Motor neuron (in vitro differentiated cells): ENCODE measurements at regions of chr10 and their contacts with region 1.

Region 1: DNA sequence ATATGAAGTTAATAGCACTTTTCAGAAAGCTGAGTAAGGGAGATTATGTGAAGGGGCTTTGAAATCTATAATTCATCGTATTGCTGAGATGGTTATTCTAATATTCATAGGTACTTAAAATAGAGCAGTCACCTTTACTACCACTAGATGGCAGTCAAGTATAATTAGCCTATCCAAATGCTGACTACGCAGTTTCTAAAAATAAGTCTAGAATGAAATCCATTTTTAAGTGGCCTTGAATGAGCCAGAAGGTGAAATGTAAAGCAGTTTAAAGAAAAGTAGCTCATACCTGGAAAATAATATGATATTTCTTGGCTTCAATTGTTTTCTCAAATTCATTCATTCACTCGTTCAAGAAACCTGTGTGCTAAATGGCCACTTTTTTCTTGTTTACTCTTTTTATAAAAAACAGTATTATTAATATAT is 1277.1 kb downstream of the GATA3 start:
- ATAC-seq: peak in 5 of 8 experiments; percentile 35 to 71 (median 49)
- H3K4me3 ChIP-seq: no peak overlapping the region
- H3K27ac ChIP-seq: no peak overlapping the region
- H3K4me1 ChIP-seq: peaks cover 0 to 5% of the 10 kb centered on the region in 2 donors

Region 2: DNA sequence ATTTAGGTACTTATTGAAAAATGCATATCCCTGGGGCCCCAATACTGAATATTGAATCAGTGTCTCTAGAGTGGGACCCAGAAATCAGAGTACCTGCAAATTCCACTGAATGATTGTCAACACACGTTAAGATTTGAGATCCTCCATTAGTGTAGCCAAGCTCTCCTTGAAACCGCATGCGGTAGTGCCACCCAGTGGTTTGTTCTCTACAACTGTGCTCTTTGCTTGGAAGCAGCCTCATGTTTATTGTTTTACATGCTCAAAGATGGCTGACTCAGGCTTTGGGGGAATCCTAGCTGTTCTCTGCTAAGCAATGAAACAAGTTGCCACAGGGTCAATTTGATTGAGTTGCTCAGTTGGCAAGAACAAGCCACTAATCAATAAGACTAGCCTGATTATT is 1345.9 kb after region 1 on chr10:
- in situ Hi-C with region 1: loop called in 1 of 9 experiments (anchors 25 kb)
- ATAC-seq: peak; percentile 47 to 95 (median 70)
- H3K4me3 ChIP-seq: no peak overlapping the region
- H3K27ac ChIP-seq: no peak overlapping the region
- H3K4me1 ChIP-seq: peaks cover 0 to 3% of the 10 kb centered on the region in 2 donors

Region 3: DNA sequence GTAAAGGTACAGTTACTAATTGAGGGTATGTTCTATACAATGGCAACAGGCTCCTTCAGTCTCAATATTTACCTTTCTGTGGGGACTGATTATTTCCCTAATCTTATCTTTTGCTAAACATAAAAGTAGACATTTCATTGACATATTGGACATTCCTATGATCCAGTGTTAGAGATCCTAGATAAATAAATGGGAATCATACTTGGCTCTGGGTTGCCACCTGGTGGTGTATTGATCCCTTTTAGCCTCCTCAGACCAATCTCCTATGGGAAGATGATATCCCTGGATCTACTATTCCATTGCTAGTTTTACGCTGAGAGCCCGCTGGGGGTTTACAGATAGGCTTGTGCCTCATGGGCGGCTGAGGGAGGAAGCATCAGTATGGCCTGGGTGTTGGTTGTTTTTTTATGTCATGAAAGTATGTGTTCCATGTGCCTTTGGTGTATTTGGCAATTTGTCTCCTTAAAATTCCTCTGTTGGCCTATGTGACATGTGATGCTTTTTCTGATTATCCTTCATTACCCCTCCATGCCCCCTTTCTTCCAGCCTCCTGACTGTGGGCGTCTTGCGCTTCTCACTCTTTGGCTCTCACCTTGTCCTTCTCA is 1704.9 kb after region 1 on chr10:
- in situ Hi-C with region 1: loop called in 1 of 9 experiments (anchors 25 kb)
- ATAC-seq: peak; percentile 53 to 89 (median 63)
- H3K4me3 ChIP-seq: no peak overlapping the region
- H3K27ac ChIP-seq: no peak overlapping the region
- H3K4me1 ChIP-seq: peaks cover 11 to 14% of the 10 kb centered on the region in 2 donors